ENCODE measurements at regions of chr3 and their contacts with region 1.

Region 1: DNA sequence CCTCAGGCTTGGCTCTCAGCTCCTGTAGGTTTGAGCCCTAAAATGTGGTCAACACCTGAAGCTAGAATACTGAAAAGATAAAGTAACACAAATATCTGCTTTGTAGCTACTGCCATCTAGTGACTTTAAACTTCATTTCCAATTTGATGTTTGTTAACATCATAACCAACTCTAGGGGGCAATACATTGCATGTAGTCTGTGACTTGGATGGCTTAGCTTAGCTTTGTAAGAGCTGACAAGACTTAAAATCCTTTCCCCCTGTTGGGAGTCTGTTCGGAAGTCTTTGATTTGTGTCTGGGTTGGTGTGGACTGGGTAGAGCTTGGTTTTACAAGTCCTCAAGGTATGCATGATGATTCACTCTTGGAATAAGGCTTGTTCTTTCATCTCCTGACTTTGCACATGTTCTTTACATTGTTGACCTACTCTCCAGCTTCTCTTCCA is 51.7 kb downstream of the SCN11A start:
- DNase-seq: peak; percentile 31
- H3K4me3 ChIP-seq: no peak overlapping the region
- H3K27me3 ChIP-seq: no peaks in the 10 kb centered on the region
- CTCF ChIP-seq: peak; percentile 82

Region 2: DNA sequence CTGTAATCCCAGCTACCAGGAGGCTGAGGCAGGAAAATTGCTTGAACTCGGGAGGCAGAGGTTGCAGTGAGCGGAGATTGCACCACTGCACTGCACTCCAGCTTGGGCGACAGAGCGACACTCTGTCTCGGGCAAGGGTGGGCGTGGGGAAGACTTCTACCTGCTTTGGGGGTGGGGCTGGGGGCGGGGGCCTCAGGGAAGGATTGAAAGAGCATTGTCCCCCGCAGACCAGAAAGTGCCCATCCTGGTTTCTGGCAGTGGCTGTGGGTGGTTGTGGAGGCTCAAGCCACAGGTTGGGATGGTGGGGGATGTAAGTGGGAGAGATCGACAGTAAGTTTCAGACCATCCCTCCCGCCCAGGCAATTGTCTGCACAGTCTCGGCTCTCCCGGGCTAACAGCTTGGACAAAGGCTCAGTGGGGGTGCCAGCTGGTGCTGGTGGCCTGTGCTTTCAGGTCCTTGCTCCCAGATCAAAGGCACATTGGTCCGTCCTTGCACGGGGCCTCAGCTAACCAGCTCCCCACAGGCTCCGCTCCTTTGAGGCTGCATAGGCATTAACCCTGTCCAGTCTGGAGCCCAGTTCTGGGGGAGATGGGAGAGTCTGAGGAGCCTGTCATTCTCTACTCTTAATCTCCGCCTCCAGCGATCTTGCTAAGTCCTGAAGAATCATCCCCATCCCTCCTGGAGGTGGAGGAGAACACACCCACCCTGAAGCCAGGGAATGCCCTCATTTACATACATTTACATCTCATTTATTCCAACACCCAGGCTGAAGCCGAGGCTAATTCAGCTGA is 359.2 kb before region 1 on chr3:
- CTCF ChIA-PET with region 1: interaction called, 11 read pairs
- POLR2A ChIA-PET with region 1: no interaction called
- DNase-seq: no peak
- H3K4me3 ChIP-seq: no peak overlapping the region
- H3K27me3 ChIP-seq: peaks cover 3% of the 10 kb centered on the region
- CTCF ChIP-seq: no peak

Region 3: DNA sequence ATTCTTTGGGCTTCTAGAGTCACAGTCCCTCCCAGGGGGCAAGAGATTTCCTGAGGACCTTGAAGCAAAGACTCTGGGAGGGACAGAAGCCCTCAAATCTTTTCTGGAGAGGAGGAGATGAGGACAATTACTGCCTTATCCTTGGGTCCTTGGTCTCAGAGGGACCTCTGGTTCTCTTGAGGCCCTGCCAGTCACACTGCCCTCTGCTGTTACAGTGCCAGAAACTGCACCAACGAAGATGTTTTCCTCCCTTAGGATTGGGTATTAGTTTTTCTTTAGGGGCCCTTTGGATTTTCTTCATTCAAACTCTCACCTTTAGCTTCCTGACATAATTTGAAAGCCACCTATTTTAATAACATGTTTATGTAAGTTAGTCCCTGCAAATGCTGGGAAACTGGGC is 292.3 kb before region 1 on chr3:
- CTCF ChIA-PET with region 1: no interaction called
- POLR2A ChIA-PET with region 1: no interaction called
- DNase-seq: no peak
- H3K4me3 ChIP-seq: no peak overlapping the region
- H3K27me3 ChIP-seq: no peaks in the 10 kb centered on the region; the same call in 1 of the 2 replicates
- CTCF ChIP-seq: peak; percentile 37

Region 4: DNA sequence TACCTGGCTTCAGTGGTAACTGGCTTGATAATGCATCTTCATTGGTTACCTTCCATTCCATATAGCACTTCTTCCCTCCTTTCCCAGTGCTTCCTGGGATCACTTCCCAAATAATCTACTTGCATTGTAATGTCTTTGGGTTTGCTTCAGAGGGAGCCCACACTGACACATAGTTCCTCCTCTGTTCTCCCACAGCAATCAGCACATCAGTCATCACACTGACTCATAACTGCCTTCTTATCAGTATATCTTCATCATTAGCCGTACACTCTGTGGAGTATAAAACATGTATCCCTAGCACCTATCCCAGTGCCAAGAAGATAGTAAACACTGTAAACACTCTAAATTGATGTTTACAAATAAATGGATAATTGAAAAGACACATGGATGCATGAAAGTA is 92.6 kb before region 1 on chr3:
- CTCF ChIA-PET with region 1: interaction called, 15 read pairs
- POLR2A ChIA-PET with region 1: no interaction called
- DNase-seq: no peak
- H3K4me3 ChIP-seq: no peak overlapping the region
- H3K27me3 ChIP-seq: no peaks in the 10 kb centered on the region
- CTCF ChIP-seq: no peak

Region 5: DNA sequence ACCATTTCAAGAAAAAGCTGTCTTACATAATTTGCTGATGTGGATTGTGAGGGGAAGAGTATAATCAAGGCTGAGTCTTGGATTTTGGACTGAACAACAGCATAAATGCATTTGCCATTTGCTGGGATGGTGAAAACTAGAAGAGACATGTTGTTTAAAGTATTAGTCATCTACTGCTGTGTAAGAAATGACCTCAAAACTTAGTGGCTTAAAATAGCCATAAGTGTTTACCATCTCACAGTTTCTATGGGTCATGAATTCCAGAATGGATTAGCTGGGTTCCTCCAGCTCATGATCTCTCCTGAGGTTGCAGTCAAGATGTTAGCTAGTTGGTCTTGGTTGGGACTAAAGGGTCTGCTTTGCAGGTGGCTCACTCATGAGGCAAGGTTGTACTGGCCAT is 14.4 kb before region 1 on chr3:
- CTCF ChIA-PET with region 1: interaction called, 13 read pairs
- POLR2A ChIA-PET with region 1: no interaction called
- DNase-seq: peak; percentile 35
- H3K4me3 ChIP-seq: no peak overlapping the region
- H3K27me3 ChIP-seq: no peaks in the 10 kb centered on the region
- CTCF ChIP-seq: no peak

Region 6: DNA sequence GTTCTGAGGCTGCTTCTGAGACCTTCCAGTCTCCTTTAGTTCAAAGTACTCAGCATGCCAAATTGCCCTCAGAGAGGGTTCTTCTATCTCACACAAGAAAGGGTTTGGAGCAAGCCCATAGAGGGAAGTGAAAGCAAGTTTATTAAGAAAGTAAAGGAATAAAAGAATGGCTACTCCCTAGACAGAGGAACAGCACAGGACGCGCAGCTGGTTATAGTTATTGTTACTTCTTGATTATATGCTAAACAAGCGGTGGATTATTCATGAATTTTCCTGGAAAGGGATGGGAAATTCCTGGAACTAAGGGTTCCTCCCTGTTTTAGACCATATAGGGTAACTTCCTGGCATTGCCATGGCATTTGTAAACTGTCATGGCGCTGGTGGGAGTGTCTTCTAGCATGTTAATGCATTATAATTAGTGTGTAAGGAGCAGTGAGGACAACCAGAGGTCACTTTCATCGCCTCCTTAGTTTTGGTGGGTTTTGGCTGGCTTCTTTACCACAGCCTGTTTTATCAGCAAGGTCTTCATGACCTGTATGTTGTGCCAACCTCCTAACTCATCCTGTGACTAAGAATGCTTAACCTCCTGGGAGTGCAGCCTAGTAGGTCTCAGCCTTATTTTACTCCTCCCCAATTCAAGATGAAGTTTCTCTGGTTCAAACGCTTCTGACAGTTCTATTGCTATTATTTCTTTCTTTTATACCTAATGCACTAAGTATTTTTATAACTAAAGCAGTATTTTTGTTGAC is 25.4 kb after region 1 on chr3:
- CTCF ChIA-PET with region 1: interaction called, 16 read pairs
- POLR2A ChIA-PET with region 1: no interaction called
- DNase-seq: no peak
- H3K4me3 ChIP-seq: no peak overlapping the region
- H3K27me3 ChIP-seq: peaks cover 3% of the 10 kb centered on the region
- CTCF ChIP-seq: no peak

Measured in BJ (cell line).